IMR-90 (cell line): ENCODE measurements at regions of chr1 and their contacts with region 1.

Region 1: GRCh38 chr1:9942939-9943788 is at the starts of genes LZIC and NMNAT1:
- DNase-seq: peak; percentile 93
- ATAC-seq: peak; percentile 95
- H3K4me3 ChIP-seq: peak within 1 kb of the TSS; percentile 85
- H3K27ac ChIP-seq: peak within 1 kb of the TSS; percentile 79
- H3K4me1 ChIP-seq: no peaks in the 10 kb centered on the region
- H3K27me3 ChIP-seq: no peaks in the 10 kb centered on the region
- CTCF ChIP-seq: no peak
- POLR2A ChIP-seq: peak; percentile 98
- RAD21 ChIP-seq: no peak; the same call in 1 of the 2 replicates
- total RNA-seq, gene LZIC: 19.0 and 37.2 TPM in 2 replicates
- total RNA-seq, gene NMNAT1: 11.7 and 11.9 TPM in 2 replicates

Region 2: GRCh38 chr1:9910425-9911178 is 32.6 kb before region 1 on chr1:
- CTCF ChIA-PET with region 1: interaction called, 5 read pairs
- POLR2A ChIA-PET with region 1: no interaction called
- dilution Hi-C with region 1: no loop called
- in situ Hi-C with region 1: no loop called
- intact Hi-C with region 1: loop called (anchors 1 kb)
- DNase-seq: peak; percentile 98
- ATAC-seq: peak; percentile 97
- H3K4me3 ChIP-seq: peak overlapping the region; percentile 51
- H3K27ac ChIP-seq: peak overlapping the region; percentile 62
- H3K4me1 ChIP-seq: peaks cover 5% of the 10 kb centered on the region
- H3K27me3 ChIP-seq: no peaks in the 10 kb centered on the region
- CTCF ChIP-seq: no peak
- POLR2A ChIP-seq: peak; percentile 7; the same call in 1 of the 2 replicates
- RAD21 ChIP-seq: no peak

Region 3: GRCh38 chr1:10032590-10033358 is 89.6 kb after region 1 on chr1 and contains the start of gene UBE4B:
- CTCF ChIA-PET with region 1: no interaction called
- POLR2A ChIA-PET with region 1: no interaction called
- dilution Hi-C with region 1: no loop called
- in situ Hi-C with region 1: no loop called
- intact Hi-C with region 1: loop called (anchors 1 kb)
- DNase-seq: peak; percentile 97
- ATAC-seq: peak; percentile 98
- H3K4me3 ChIP-seq: peak within 1 kb of the TSS; percentile 70
- H3K27ac ChIP-seq: peak within 1 kb of the TSS; percentile 84
- H3K4me1 ChIP-seq: peaks cover 6% of the 10 kb centered on the region; the same call in 1 of the 2 replicates
- H3K27me3 ChIP-seq: no peaks in the 10 kb centered on the region
- CTCF ChIP-seq: peak; percentile 87
- POLR2A ChIP-seq: no peak; the same call in 1 of the 2 replicates
- RAD21 ChIP-seq: peak; percentile 74
- total RNA-seq, gene UBE4B: 39.3 and 41.9 TPM in 2 replicates

Region 4: DNA sequence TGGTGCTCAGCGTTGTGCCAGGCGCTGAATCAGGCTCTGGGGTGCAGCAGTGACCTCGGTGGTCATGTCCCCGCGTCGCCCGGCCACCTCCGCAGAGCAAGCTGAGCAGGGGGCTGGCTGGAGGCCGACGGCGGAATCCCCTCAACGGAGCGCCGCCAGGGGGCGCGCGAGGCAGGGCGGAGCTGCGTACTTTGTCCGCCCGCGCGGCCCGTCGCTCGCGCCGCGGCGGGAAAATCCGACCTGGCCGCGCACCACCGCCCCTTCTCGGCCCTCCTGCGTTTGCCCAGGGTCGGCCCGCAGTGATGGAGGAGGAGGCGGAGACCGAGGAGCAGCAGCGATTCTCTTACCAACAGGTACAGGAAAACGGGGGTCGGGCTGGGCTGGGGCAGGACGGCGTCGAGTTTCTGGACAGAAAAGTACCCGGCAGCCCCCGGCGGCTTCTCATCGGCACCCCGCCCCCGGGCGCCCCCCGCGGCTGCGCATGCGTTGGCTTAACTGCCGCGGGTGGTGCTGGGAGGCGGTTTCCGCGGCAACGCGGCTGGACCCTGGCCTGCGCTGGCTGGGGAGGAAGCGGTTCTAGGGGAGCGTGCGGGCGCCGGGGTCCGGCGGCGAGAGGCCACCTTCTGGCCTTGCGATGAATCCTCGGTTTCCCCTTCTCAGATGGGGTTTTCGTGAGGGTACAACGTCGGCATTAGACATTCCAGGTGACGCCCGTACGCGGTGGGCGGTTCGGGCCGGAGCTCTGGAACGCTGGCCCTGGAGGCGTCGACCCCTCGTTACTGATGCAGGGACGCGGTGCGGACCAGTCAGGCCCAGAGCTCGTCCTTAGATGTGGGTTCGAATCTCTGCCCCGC is 487.3 kb after region 1 on chr1 and contains the start of gene CENPS:
- CTCF ChIA-PET with region 1: no interaction called
- POLR2A ChIA-PET with region 1: no interaction called
- dilution Hi-C with region 1: no loop called
- in situ Hi-C with region 1: no loop called
- intact Hi-C with region 1: loop called (anchors 2 kb)
- DNase-seq: peak; percentile 83
- ATAC-seq: peak; percentile 95
- H3K4me3 ChIP-seq: peak within 1 kb of the TSS; percentile 76
- H3K27ac ChIP-seq: peak within 1 kb of the TSS; percentile 86
- H3K4me1 ChIP-seq: peaks cover 2% of the 10 kb centered on the region; the same call in 1 of the 2 replicates
- H3K27me3 ChIP-seq: no peaks in the 10 kb centered on the region
- CTCF ChIP-seq: peak; percentile 98
- POLR2A ChIP-seq: no peak; the same call in 1 of the 2 replicates
- RAD21 ChIP-seq: peak; percentile 66
- total RNA-seq, gene CENPS: 9.9 and 11.4 TPM in 2 replicates